Activated CD8-positive, alpha-beta T cell treated with anti-CD3 and anti-CD28 coated beads, Interleukin-2, amount 10 ng/mL, durations not matched to agents 7 days and 5 days (primary cell): ENCODE measurements at regions of chr7 and their contacts with region 1.

Region 1: DNA sequence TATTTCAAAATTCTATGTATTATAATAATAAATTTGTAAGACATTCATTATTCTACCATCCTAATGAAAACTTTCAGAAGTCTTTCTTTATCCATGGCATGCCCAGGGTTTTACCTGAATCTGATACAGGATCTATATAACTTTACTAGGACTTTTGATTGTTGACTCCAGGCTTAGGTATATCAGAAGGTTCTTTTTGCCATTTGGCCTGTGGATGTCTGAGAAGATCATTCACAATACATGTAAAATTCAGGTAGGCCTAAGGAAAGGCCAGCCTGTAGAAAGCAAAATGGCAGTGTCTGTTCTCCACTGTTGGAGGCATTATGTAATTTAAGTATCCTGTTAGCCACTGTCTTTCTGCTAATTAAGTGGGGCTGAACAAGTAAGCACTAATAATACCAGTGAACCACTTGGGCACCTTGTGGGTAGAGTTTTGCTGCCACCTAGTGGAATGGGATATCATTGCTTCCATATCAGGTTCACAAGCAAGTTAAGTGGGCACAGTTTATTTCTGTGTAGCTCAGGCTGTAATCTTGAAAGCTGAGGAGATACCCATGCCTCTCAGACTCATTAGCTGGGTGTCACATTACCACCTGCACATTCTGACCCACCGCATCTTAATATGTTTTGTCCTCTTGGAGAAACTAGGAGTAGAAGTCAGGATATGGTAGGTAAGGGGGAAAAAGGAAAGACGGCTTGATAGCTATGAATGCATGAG is 105.5 kb downstream of the SEPTIN7 start:
- DNase-seq: peak; percentile 80
- ATAC-seq: peak; percentile 85
- H3K4me3 Mint-ChIP-seq: no peak overlapping the region
- H3K27ac Mint-ChIP-seq: no peak overlapping the region
- H3K4me1 Mint-ChIP-seq: peaks cover 13% of the 10 kb centered on the region
- H3K27me3 Mint-ChIP-seq: no peaks in the 10 kb centered on the region

Region 2: GRCh38 chr7:35714862-35715261 is 191.5 kb before region 1 on chr7:
- CTCF ChIA-PET with region 1: interaction called, 22 read pairs
- POLR2A ChIA-PET with region 1: no interaction called
- DNase-seq: no peak
- ATAC-seq: no peak
- H3K4me3 Mint-ChIP-seq: no peak overlapping the region
- H3K27ac Mint-ChIP-seq: no peak overlapping the region
- H3K4me1 Mint-ChIP-seq: peaks cover 19% of the 10 kb centered on the region
- H3K27me3 Mint-ChIP-seq: peaks cover 4% of the 10 kb centered on the region

Region 3: DNA sequence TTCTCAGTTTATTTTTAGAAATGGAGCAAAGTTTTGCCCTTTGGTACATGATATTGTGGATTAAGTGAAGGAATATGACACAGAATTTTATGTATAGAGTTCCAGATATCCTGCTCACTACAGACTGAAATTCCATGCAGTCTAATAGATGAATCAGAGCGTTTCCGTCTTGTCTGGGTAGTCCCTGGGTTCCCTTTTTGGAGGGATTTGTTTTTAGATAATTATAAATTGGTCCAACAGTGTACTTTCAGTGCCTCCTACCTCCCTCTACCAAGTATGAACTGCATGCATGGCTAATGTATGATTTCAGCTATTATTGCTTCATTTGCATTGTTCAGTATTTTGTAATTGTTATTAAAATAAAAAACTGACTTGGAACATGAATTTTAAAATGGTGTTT is 31.1 kb before region 1 on chr7:
- CTCF ChIA-PET with region 1: no interaction called
- POLR2A ChIA-PET with region 1: no interaction called
- DNase-seq: no peak
- ATAC-seq: no peak
- H3K4me3 Mint-ChIP-seq: no peak overlapping the region
- H3K27ac Mint-ChIP-seq: no peak overlapping the region
- H3K4me1 Mint-ChIP-seq: no peaks in the 10 kb centered on the region
- H3K27me3 Mint-ChIP-seq: no peaks in the 10 kb centered on the region

Region 4: GRCh38 chr7:35891004-35891830 is 15.1 kb before region 1 on chr7:
- CTCF ChIA-PET with region 1: interaction called, 10 read pairs
- POLR2A ChIA-PET with region 1: no interaction called
- DNase-seq: no peak
- ATAC-seq: no peak
- H3K4me3 Mint-ChIP-seq: no peak overlapping the region
- H3K27ac Mint-ChIP-seq: no peak overlapping the region
- H3K4me1 Mint-ChIP-seq: peaks cover 10% of the 10 kb centered on the region
- H3K27me3 Mint-ChIP-seq: no peaks in the 10 kb centered on the region